ENCODE measurements at regions of chr11 and their contacts with region 1.

Region 1: GRCh38 chr11:73597956-73598718 is at the start of gene FAM168A:
- DNase-seq: peak; percentile 97 to 98 (median 98)
- ATAC-seq: peak; percentile 97 to 99 (median 98)
- H3K4me3 ChIP-seq: peak within 1 kb of the TSS; percentile 75 to 97 (median 90)
- H3K27ac ChIP-seq: peak within 1 kb of the TSS; percentile 69 to 92 (median 86)
- H3K4me1 ChIP-seq: peaks cover 0 to 28% (median 15%) of the 10 kb centered on the region in 12 donors
- H3K27me3 ChIP-seq: no peaks in the 10 kb centered on the region
- CTCF ChIP-seq: peak in 8 of 12 donors; percentile 14 to 44 (median 25)
- POLR2A ChIP-seq: peak in 1 of 2 donors; percentile 75
- total RNA-seq, gene FAM168A: 21.1 to 39.1 (median 31.2) TPM

Region 2: DNA sequence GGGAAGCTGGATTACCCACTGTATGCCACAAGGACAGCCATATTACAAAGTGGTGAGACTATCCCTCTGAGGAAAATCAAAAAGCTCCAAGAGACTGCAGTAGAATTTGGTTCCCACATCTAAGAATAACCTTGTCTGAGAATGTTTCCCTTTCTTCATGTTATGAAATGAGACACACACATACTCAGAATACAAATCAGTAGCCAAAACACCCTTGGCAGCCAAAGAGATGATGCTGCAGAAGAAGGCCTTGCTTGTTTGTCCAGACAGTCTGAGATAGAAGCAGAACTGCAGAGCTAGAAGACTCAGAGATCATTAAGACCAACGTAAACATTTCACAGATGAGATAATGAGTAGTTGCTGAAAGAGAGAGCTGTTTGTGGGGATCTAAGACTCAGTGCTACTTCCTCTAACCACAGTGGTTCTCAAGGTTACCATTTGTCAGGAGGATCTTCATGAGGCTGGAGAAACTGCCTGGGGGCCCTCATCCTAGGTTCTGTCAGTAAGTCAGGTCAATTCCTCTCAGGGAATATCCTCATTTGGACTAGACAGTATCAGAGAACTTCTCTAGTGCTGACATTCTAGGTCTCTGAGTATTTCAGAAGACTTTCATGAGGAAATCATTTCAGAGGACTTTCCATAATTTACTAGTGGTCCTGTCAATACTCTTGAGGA is 183.0 kb before region 1 on chr11:
- intact Hi-C with region 1: loop called in 1 of 10 experiments (anchors 5 kb)
- DNase-seq: no peak
- ATAC-seq: peak in 3 of 4 donors; percentile 55 to 64 (median 62)
- H3K4me3 ChIP-seq: no peak overlapping the region
- H3K27ac ChIP-seq: peak overlapping the region in 7 of 12 donors; percentile 20 to 81 (median 52)
- H3K4me1 ChIP-seq: peaks cover 0 to 48% (median 10%) of the 10 kb centered on the region in 12 donors
- H3K27me3 ChIP-seq: no peaks in the 10 kb centered on the region
- CTCF ChIP-seq: no peak
- POLR2A ChIP-seq: no peak

Region 3: DNA sequence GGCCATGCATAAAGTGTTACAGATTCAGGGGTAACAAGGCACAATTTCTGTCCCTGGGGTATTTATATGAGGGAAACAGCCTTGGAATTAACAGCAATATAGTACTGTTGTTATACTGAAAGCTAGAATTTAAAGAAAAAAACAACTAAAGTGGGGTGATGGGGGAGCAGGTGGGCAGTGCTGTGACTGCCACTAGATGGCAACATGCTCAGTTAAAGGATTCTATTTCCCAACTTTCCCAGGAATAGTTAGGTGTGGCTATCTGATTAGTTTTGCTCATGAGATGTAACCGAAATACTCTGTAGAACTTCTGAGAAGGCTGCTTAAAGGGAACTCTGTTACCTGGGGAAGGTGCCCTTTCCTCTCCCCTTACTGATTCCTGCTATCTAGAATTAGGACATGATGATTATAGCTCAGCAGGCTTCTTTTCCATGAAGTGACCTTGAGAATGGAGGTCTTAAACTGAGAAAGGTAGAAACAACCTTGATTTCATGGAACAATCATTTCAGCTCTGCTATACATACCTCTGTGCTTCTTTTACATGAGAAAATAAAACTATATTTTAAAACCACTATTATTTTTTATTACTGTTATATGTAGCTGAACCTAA is 119.3 kb before region 1 on chr11:
- intact Hi-C with region 1: loop called in 4 of 10 experiments (anchors 2 to 10 kb)
- DNase-seq: no peak
- ATAC-seq: peak in 1 of 4 donors; percentile 34
- H3K4me3 ChIP-seq: no peak overlapping the region
- H3K27ac ChIP-seq: no peak overlapping the region
- H3K4me1 ChIP-seq: peaks cover 0 to 15% (median 0%) of the 10 kb centered on the region in 12 donors
- H3K27me3 ChIP-seq: no peaks in the 10 kb centered on the region
- CTCF ChIP-seq: peak; percentile 40 to 64 (median 52)
- POLR2A ChIP-seq: no peak

Region 4: DNA sequence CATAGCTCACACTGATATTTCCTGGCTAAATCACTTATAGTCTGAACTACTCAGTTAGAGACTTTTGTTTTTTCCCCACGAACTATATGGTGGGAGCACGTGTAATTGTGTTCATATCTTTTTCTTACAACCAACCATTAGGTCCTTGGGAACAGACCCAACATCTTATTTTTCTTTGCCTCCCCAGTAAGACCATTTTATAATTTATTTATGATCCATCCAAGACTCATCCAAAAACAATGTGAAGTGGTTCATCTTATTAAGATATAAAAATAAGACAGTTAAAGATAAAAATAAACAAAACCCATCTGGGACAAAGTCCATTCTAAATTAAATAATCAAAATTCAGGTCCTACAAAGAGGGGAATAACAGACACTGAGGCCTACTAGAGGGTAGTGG is 91.1 kb before region 1 on chr11:
- intact Hi-C with region 1: no loop called
- DNase-seq: no peak
- ATAC-seq: no peak
- H3K4me3 ChIP-seq: no peak overlapping the region
- H3K27ac ChIP-seq: no peak overlapping the region
- H3K4me1 ChIP-seq: peaks cover 0 to 3% (median 0%) of the 10 kb centered on the region in 12 donors
- H3K27me3 ChIP-seq: no peaks in the 10 kb centered on the region
- CTCF ChIP-seq: no peak
- POLR2A ChIP-seq: no peak